Activated T-helper 2 cell treated with anti-CD3 and anti-CD28 coated beads, Interferon-gamma antibody, Interleukin-2, Interleukin-4, amounts not matched to agents 10 μg/mL and 5 μg/mL and 100 μg/mL, durations not matched to agents 14 hours and 24 hours and 36 hours (primary cell): ENCODE measurements at regions of chr14 and their contacts with region 1.

Region 1: DNA sequence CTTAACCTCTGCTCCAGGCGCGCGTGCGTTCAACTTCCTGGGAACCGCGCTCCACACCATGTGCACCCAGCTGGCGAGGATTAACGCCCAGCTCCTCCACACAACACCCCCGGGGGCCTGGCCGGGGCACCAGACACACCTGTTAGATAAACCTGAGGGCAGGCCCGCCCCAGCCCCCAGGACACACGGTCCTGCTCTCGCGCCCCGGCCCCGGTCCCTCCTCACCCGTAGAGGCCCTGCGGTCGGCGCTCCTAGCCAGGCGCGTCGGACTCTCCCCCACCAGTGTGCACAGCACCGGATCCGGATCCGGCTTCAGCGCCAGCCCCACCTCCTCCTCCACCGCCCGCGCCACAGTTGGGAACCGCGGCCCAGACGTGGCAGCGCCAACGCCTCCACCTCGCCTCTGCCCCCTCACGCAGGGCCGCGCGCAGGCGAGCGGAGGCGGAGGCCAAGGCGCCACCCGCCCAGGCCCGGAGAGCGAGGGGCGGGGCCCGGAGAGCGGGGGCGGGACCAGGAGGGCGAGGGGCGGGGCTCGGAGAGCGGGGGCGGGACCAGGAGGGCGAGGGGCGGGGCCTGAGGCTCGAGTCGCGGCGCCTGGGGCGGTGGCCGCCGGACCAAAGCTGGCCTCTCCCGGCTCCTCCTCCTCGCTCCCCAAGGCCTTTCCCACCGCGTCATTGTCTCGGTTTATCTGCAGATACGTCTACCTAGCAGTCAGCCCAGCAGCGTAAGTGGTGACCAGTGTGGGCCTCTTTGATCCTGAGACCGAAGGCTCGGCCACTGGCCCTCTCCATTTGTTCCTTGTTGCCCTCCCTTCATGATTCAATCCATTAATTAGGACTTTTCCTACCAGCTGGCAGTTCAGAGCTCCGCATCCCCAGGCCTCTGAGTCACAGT is at the start of gene GNPNAT1:
- DNase-seq: peak; percentile 85
- H3K4me3 Mint-ChIP-seq: peak within 1 kb of the TSS; percentile 89
- H3K27ac Mint-ChIP-seq: peak within 1 kb of the TSS; percentile 73
- H3K4me1 Mint-ChIP-seq: peaks cover 27% of the 10 kb centered on the region
- H3K27me3 Mint-ChIP-seq: no peaks in the 10 kb centered on the region
- total RNA-seq, gene GNPNAT1: 29.4 and 34.8 TPM in 2 replicates

Region 2: GRCh38 chr14:52706724-52707706 is 84.4 kb before region 1 on chr14 and contains the start of gene PSMC6:
- intact Hi-C with region 1: loop called (anchors 1 kb)
- DNase-seq: peak; percentile 84
- H3K4me3 Mint-ChIP-seq: peak within 1 kb of the TSS; percentile 99
- H3K27ac Mint-ChIP-seq: peak within 1 kb of the TSS; percentile 93
- H3K4me1 Mint-ChIP-seq: peaks cover 39% of the 10 kb centered on the region
- H3K27me3 Mint-ChIP-seq: no peaks in the 10 kb centered on the region
- total RNA-seq, gene PSMC6: 144 and 155 TPM in 2 replicates

Region 3: DNA sequence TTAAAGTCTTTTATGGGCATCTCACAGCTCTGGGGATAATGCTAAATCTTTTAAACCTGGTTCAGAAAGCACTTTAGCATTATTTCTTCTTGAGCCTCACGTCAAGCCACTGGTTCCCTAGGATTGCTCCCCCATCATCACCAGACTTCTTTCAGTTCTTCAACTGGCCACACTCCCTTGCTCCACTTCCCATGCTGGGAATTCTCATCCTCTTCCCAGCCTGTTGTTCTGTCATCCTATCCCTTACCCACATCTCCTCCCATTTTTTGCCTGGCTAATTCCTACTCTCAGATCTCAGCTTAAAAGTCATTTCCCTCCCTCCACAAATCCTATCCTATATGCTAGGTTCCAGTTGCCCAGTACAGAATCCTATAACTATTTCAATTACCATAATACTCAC is 145.0 kb after region 1 on chr14:
- intact Hi-C with region 1: no loop called
- DNase-seq: no peak
- H3K4me3 Mint-ChIP-seq: no peak overlapping the region
- H3K27ac Mint-ChIP-seq: no peak overlapping the region
- H3K4me1 Mint-ChIP-seq: no peaks in the 10 kb centered on the region
- H3K27me3 Mint-ChIP-seq: peaks cover 28% of the 10 kb centered on the region